Activated CD4-positive, alpha-beta memory T cell treated with anti-CD3 and anti-CD28 coated beads, Interleukin-2, amount 10 ng/mL, durations not matched to agents 7 days and 5 days (primary cell): ENCODE measurements at regions of chr9 and their contacts with region 1.

Region 1: DNA sequence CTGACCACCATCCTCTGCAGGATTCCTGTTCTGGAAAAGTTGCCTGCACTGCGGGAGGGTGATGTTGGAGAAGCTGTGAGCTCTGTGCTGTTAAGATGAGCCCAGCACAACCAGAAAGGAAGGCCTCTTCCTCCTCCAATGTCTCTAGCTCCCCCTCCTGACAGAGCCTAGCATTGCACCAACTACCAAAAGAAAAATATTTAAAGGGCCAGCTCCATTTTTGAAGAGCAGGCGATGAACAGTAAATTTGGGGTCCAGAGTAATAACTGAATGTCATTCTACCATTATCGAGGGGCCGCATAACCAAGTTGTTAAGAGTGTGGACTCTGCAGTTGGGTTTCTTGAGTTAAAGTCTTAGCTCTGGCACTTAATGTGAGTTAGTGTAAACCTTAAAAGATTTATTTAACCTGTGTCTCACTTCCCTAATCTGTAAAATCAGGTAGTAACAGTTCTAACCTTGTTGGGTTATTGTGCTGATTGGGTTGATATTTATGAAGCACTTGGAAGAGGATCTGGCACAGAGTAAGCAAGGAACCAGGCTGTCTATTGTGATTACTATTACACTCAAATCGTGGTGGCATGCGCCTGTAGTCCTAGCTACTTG is 3.9 kb downstream of the TEX53 start:
- DNase-seq: peak; percentile 85
- H3K4me3 Mint-ChIP-seq: no peak overlapping the region
- H3K27ac Mint-ChIP-seq: peak overlapping the region; percentile 36
- H3K4me1 Mint-ChIP-seq: peaks cover 21% of the 10 kb centered on the region
- H3K27me3 Mint-ChIP-seq: no peaks in the 10 kb centered on the region

Region 2: GRCh38 chr9:114405294-114406034 is 248.2 kb before region 1 on chr9:
- CTCF ChIA-PET with region 1: interaction called, 314 read pairs
- POLR2A ChIA-PET with region 1: interaction called, 19 read pairs
- DNase-seq: peak; percentile 84
- H3K4me3 Mint-ChIP-seq: no peak overlapping the region
- H3K27ac Mint-ChIP-seq: no peak overlapping the region
- H3K4me1 Mint-ChIP-seq: peaks cover 16% of the 10 kb centered on the region
- H3K27me3 Mint-ChIP-seq: no peaks in the 10 kb centered on the region

Region 3: GRCh38 chr9:114434878-114435311 is 218.8 kb before region 1 on chr9:
- CTCF ChIA-PET with region 1: interaction called, 54 read pairs
- POLR2A ChIA-PET with region 1: no interaction called
- DNase-seq: no peak
- H3K4me3 Mint-ChIP-seq: no peak overlapping the region
- H3K27ac Mint-ChIP-seq: no peak overlapping the region
- H3K4me1 Mint-ChIP-seq: peaks cover 8% of the 10 kb centered on the region
- H3K27me3 Mint-ChIP-seq: no peaks in the 10 kb centered on the region

Region 4: GRCh38 chr9:114518599-114519022 is 135.0 kb before region 1 on chr9:
- CTCF ChIA-PET with region 1: interaction called, 12 read pairs
- POLR2A ChIA-PET with region 1: no interaction called
- DNase-seq: no peak
- H3K4me3 Mint-ChIP-seq: no peak overlapping the region
- H3K27ac Mint-ChIP-seq: no peak overlapping the region
- H3K4me1 Mint-ChIP-seq: peaks cover 18% of the 10 kb centered on the region
- H3K27me3 Mint-ChIP-seq: peaks cover 45% of the 10 kb centered on the region

Region 5: DNA sequence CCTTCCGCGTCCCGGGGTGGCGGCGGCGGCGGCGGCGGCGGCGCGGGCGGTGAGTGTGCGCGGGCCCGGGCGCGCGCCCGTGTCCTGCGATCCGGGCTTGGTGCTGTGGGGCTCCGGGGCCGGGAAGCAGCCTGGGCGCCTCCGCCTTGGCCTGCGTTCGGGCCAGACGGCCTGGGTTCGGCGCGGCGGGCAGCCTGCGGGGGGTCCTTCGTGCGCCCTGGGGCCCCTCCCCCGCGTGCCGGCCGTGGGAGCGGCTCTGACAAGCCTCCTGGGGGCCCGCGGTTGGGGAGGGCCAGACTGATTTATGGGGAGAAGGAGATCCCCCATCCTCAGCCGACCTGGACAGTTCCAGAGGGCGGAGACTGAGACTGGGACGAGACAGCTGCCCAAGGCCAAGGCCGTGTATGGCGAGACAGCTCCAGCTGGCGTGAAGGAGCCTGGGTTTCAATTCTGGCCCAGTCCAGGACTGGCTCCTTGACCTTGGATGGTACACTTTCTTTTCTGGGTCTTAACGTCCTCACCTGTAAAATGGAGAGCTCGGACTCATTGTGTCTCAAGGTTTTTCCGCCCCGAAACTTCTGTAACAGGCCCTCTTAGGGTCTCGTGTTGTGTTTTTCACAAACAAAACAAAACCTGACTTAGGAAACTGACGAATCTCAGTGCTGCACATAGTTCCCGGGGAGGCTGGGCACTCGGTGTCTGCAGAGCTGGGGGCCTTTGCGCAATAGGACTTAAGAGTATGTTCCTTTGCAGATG is 42.0 kb before region 1 on chr9:
- CTCF ChIA-PET with region 1: interaction called, 25 read pairs
- POLR2A ChIA-PET with region 1: interaction called, 5 read pairs
- DNase-seq: peak; percentile 51
- H3K4me3 Mint-ChIP-seq: peak overlapping the region; percentile 84
- H3K27ac Mint-ChIP-seq: peak overlapping the region; percentile 76
- H3K4me1 Mint-ChIP-seq: peaks cover 49% of the 10 kb centered on the region
- H3K27me3 Mint-ChIP-seq: no peaks in the 10 kb centered on the region

Region 6: DNA sequence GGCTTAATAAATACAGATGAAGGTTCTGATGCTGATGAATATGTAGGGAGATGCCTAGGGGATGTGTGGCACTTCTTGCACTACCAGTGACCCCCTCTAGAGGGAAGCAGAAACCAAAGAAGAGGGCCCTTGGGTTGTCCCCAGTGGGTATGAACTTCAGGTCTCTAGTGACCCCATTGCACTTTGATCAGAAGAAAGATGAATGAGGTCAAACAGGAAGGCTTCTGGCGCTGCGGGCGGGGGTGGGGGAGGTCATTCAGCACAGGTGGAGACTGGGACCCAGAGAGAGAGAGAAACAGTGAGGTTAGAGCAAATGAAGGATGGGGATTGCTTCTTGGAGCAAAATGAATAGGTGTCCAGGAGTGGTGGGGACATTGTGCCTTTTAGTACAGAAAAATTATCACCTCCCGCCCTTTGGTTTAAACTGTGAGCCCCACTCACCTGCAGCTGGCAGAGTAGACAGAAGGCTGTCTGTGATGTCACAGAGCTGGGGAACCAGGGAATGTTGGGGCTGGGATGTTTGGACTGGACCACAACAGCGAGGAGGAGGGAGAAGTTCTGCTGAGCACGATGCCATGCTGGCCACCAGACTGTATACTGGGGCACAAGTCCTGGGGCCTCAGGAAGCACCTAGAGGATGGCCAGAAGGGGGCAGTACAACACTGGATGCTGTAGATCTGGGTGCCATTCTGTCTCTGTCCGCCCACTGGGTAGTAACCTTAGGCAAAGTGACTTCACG is 28.1 kb after region 1 on chr9 and contains the start of gene TEX48:
- CTCF ChIA-PET with region 1: interaction called, 12 read pairs
- POLR2A ChIA-PET with region 1: no interaction called
- DNase-seq: peak; percentile 89
- H3K4me3 Mint-ChIP-seq: peak within 1 kb of the TSS; percentile 55
- H3K27ac Mint-ChIP-seq: peak within 1 kb of the TSS; percentile 84
- H3K4me1 Mint-ChIP-seq: peaks cover 57% of the 10 kb centered on the region
- H3K27me3 Mint-ChIP-seq: peaks cover 13% of the 10 kb centered on the region
- total RNA-seq, gene TEX48: 0.48 to 1.5 TPM